Activated CD4-positive, alpha-beta memory T cell treated with anti-CD3 and anti-CD28 coated beads for 36 hours (primary cell): ENCODE measurements at regions of chr5 and their contacts with region 1.

Region 1: GRCh38 chr5:40834849-40835787 is at the start of gene RPL37:
- DNase-seq: peak; percentile 96
- H3K4me3 Mint-ChIP-seq: peak within 1 kb of the TSS; percentile 100
- H3K27ac Mint-ChIP-seq: peak within 1 kb of the TSS; percentile 100
- H3K4me1 Mint-ChIP-seq: peaks cover 56% of the 10 kb centered on the region
- H3K27me3 Mint-ChIP-seq: no peaks in the 10 kb centered on the region
- total RNA-seq, gene RPL37: 1,815 to 1,873 TPM

Region 2: GRCh38 chr5:40570408-40571129 is 264.5 kb before region 1 on chr5:
- CTCF ChIA-PET with region 1: no interaction called
- POLR2A ChIA-PET with region 1: no interaction called
- intact Hi-C with region 1: loop called (anchors 10 kb)
- DNase-seq: no peak
- H3K4me3 Mint-ChIP-seq: no peak overlapping the region
- H3K27ac Mint-ChIP-seq: no peak overlapping the region
- H3K4me1 Mint-ChIP-seq: peaks cover 15% of the 10 kb centered on the region
- H3K27me3 Mint-ChIP-seq: no peaks in the 10 kb centered on the region

Region 3: DNA sequence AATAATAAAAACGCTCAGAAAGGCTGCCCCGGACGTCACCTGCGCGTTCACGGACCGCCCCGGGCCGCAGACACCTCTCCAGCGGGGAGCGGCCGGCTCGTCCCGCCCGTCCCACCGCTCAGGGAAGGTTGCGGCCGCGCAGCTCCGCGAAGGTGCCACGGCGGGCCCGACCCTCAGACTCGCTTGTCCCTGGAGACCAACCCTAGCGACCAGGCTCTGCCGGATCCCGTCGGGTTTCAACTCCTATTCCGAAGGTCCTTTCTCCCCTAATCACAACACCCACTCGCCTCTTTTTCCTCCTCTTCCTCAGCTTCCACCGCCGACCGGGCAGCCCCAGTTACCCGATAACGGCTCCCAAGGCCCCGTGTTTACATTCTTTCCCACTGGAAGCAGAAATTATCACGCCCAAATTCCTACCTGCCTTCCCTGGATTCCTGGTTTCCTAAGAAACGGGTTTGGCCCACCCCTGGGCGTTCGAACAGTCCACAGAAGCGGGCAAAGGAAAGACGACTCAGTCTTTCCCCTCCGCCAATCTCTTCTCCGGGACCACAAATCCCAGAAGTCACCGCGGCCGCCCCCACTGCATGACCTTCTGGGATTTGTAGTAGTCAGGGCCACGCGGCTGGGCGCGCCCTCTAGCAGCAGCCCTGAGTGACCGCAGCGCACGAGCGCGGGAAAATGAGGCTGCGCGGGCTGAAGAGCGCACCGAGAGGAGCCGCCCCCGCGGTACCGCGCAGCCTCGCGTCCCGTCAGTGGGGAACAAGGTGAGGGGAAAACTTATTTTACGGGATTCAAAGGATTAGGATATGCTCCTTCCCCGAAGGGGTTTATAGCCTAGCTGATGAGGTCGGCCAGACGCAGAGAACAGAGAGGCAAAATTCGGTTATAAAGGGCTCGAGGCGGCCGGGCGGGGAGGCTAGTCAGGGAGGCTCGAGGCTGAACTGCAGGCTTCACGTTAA is 79.4 kb before region 1 on chr5 and contains the start of gene TTC33:
- CTCF ChIA-PET with region 1: interaction called, 8 read pairs
- POLR2A ChIA-PET with region 1: interaction called, 8 read pairs
- intact Hi-C with region 1: loop called (anchors 1 kb)
- DNase-seq: peak; percentile 98
- H3K4me3 Mint-ChIP-seq: peak within 1 kb of the TSS; percentile 21
- H3K27ac Mint-ChIP-seq: no peak within 1 kb of the TSS
- H3K4me1 Mint-ChIP-seq: peaks cover 17% of the 10 kb centered on the region
- H3K27me3 Mint-ChIP-seq: no peaks in the 10 kb centered on the region
- total RNA-seq, gene TTC33: 30.2 to 34.1 TPM

Region 4: DNA sequence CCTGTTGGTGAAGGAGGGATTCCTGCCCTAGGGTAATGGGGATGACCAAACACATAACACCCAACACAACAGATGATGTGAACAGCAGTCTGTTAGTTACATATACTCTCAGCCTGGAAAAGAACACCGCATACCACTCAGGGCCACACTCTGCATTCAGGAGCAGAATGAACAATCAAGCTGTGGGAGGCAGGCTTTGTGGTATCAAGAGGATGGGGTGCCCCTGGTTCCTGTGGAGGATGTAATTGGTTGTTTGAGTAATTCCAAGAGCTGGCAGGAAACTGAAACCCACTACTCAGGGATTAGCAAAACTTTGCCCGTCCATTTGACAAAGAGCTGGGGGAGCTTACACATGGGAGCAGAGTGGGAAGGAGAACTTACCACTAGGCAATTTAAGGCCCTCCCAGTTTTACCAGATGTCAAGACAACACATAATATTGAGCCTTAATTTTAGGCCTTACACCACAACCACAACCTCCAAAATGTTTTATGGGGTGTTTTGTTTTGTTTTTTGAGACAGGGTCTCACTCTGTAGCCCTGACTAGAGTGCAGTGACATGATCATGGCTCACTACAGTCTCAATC is 21.3 kb before region 1 on chr5:
- CTCF ChIA-PET with region 1: no interaction called
- POLR2A ChIA-PET with region 1: interaction called, 15 read pairs
- intact Hi-C with region 1: loop called (anchors 1 kb)
- DNase-seq: peak; percentile 83
- H3K4me3 Mint-ChIP-seq: no peak overlapping the region
- H3K27ac Mint-ChIP-seq: peak overlapping the region; percentile 64
- H3K4me1 Mint-ChIP-seq: peaks cover 9% of the 10 kb centered on the region
- H3K27me3 Mint-ChIP-seq: no peaks in the 10 kb centered on the region

Region 5: GRCh38 chr5:41903892-41904799 is 1069.0 kb after region 1 on chr5 and contains the start of gene RIMOC1:
- CTCF ChIA-PET with region 1: no interaction called
- POLR2A ChIA-PET with region 1: no interaction called
- intact Hi-C with region 1: loop called (anchors 1 kb)
- DNase-seq: peak; percentile 99
- H3K4me3 Mint-ChIP-seq: peak within 1 kb of the TSS; percentile 91
- H3K27ac Mint-ChIP-seq: peak within 1 kb of the TSS; percentile 93
- H3K4me1 Mint-ChIP-seq: peaks cover 37% of the 10 kb centered on the region
- H3K27me3 Mint-ChIP-seq: peaks cover 2% of the 10 kb centered on the region
- total RNA-seq, gene RIMOC1: 25.0 to 25.8 TPM